Right ventricle myocardium inferior (tissue), 1 donor: ENCODE measurements at regions of chr2 and their contacts with region 1.

Region 1: GRCh38 chr2:88590998-88591613 is 36.2 kb downstream of the EIF2AK3 start:
- DNase-seq: no peak
- ATAC-seq: peak; percentile 76

Region 2: GRCh38 chr2:88669371-88670214 is 78.5 kb after region 1 on chr2:
- intact Hi-C with region 1: loop called (anchors 1 kb)
- DNase-seq: no peak
- ATAC-seq: peak; percentile 62